ENCODE measurements at regions of chrX and their contacts with region 1.

Region 1: DNA sequence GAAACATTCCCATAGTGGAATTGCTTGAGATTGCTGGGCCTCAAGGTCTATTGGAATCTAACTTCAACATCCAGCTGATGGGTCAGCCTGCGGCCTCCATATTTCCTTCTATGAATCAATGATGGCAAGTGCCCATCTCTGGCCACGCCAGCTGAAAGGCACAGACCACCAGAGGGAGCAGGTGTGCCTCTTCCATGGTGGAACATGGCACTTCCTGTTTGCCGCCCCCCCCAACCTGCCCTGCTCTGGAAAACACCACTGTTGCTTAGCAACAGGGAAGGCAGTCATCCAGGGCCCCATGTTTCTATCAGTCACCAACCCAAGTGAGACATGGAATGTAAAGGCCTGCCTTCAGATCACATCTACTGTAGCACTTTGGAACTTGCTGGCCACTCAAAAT is 11.6 kb downstream of the PAGE4 start:
- DNase-seq: peak; percentile 54
- H3K4me3 ChIP-seq: no peak overlapping the region
- H3K27ac ChIP-seq: no peak overlapping the region
- H3K4me1 ChIP-seq: no peaks in the 10 kb centered on the region; a peak in 1 of 4 replicates
- H3K27me3 ChIP-seq: no peaks in the 10 kb centered on the region; the same call in 1 of the 2 replicates
- CTCF ChIP-seq: peak; percentile 56
- EP300 ChIP-seq: no peak
- RAD21 ChIP-seq: peak; percentile 42

Region 2: DNA sequence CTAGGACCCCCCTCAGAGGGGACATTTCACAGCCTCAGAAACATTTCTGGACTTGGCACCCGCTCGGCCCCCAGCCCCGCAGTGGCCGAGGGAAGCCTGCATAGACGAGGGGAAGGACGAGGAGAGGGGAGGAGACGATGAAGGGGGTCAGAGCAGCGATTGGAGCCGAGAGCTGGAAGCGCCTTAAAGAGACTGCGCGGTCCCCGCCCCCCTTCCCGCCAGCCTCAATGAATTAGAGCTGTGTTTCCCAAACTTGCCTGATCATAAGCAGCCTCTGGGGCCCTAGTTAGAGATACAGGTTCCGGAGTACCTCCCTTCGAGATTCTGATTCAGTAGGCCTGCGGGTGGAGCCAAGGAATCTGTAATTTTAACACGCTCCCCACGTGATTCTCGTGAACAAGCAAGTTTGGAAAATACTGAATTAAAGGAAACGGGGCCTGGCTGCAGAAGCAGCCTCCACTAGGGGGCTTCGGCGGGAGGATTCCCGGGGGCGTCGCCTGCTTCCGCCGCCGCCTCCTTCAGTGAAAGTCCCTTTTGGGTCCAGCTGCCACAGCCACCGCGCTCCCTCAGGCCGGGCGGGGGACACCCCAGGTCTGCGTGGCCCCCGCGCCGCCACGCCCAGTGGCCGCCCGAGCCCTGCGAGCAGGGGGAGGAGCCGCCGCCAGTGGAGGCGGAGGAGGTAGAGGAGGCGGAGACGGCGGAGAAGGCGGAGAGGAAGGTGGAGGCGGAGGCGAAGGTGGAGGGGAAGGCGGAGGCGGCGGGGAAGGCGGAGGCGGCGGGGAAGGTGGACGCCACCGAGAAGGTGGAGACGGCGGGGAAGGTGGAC is 38.4 kb after region 1 on chrX and contains the start of gene USP27X:
- CTCF ChIA-PET with region 1: interaction called, 10 read pairs
- POLR2A ChIA-PET with region 1: interaction called, 3 read pairs
- DNase-seq: peak; percentile 80
- H3K4me3 ChIP-seq: peak within 1 kb of the TSS; percentile 54 to 66
- H3K27ac ChIP-seq: peak within 1 kb of the TSS; percentile 68 to 82
- H3K4me1 ChIP-seq: peaks cover 0 to 25% of the 10 kb centered on the region in 2 experiments; a peak in 1 of 4 replicates
- H3K27me3 ChIP-seq: no peaks in the 10 kb centered on the region
- CTCF ChIP-seq: peak; percentile 64
- EP300 ChIP-seq: no peak
- RAD21 ChIP-seq: no peak
- polyA plus RNA-seq, gene USP27X: 1.9 and 2.9 TPM in 2 replicates

Region 3: GRCh38 chrX:49995021-49995731 is 154.5 kb after region 1 on chrX:
- CTCF ChIA-PET with region 1: no interaction called
- POLR2A ChIA-PET with region 1: no interaction called
- DNase-seq: no peak
- H3K4me3 ChIP-seq: no peak overlapping the region
- H3K27ac ChIP-seq: no peak overlapping the region
- H3K4me1 ChIP-seq: peaks cover 0 to 3% of the 10 kb centered on the region in 2 experiments; a peak in 1 of 4 replicates
- H3K27me3 ChIP-seq: no peaks in the 10 kb centered on the region; the same call in 1 of the 2 replicates
- CTCF ChIP-seq: no peak
- EP300 ChIP-seq: no peak
- RAD21 ChIP-seq: no peak